PC-9 (cell line): ENCODE measurements at regions of chr14 and their contacts with region 1.

Region 1: GRCh38 chr14:103078093-103078749 is 5.8 kb upstream of the LBHD2 start:
- DNase-seq: peak; percentile 88 to 93
- H3K4me3 ChIP-seq: no peak overlapping the region
- H3K27ac ChIP-seq: no peak overlapping the region
- H3K4me1 ChIP-seq: peaks cover 28% of the 10 kb centered on the region
- H3K27me3 ChIP-seq: no peaks in the 10 kb centered on the region
- CTCF ChIP-seq: peak; percentile 96

Region 2: DNA sequence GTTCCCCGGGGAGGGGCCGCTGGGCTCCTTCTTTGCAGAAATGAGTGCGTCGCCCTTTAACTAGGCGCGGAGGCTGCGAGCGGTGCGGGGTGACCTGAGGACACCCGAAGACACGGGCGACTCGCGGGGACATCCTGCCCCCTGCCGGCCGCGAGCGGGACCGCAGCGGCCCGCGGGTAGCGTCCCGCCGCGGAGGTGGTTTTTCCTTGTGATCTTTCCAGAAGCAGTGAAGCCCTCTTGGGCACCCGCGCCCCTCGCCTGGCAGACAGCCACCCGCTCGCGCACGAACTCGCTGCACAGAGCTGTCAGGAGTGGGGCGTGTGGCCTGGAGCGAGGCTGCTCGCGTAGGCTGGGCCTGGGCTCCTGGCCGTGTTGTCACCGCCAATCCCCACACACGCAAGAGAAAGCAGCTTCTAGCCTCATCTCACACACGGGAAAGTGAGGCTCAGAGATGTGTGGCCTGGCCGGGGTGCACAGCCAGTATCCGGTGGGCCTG is 1449.7 kb before region 1 on chr14:
- CTCF ChIA-PET with region 1: interaction called, 14 read pairs
- POLR2A ChIA-PET with region 1: no interaction called
- intact Hi-C with region 1: no loop called
- DNase-seq: peak; percentile 64 to 92
- H3K4me3 ChIP-seq: no peak overlapping the region
- H3K27ac ChIP-seq: no peak overlapping the region
- H3K4me1 ChIP-seq: peaks cover 19% of the 10 kb centered on the region
- H3K27me3 ChIP-seq: no peaks in the 10 kb centered on the region
- CTCF ChIP-seq: peak; percentile 100

Region 3: GRCh38 chr14:102774391-102775153 is 303.6 kb before region 1 on chr14:
- CTCF ChIA-PET with region 1: no interaction called
- POLR2A ChIA-PET with region 1: no interaction called
- intact Hi-C with region 1: loop called (anchors 10 kb)
- DNase-seq: peak; percentile 67 to 70
- H3K4me3 ChIP-seq: no peak overlapping the region
- H3K27ac ChIP-seq: no peak overlapping the region
- H3K4me1 ChIP-seq: peaks cover 16% of the 10 kb centered on the region
- H3K27me3 ChIP-seq: no peaks in the 10 kb centered on the region
- CTCF ChIP-seq: peak; percentile 87

Region 4: DNA sequence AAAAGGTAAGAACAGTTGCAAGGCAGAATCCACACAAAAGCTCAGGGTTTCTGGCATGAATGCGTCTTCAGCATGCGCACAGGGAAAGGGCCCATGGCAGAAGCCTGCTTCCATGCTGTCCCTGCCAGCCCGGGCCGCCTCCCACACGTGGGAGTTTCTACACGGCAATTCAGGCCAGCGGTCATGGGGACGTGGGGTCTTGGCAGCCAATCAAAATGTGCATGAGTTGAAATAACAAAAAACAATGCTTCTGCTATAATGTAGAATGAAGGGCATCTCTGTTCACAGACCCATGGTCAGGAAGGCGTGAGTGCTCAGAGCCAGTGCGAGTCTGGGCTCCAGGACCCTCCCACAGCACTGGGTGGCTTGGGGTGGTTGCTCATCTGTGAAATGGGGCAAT is 127.2 kb before region 1 on chr14:
- CTCF ChIA-PET with region 1: no interaction called
- POLR2A ChIA-PET with region 1: no interaction called
- intact Hi-C with region 1: no loop called
- DNase-seq: no peak
- H3K4me3 ChIP-seq: no peak overlapping the region
- H3K27ac ChIP-seq: no peak overlapping the region
- H3K4me1 ChIP-seq: no peaks in the 10 kb centered on the region
- H3K27me3 ChIP-seq: no peaks in the 10 kb centered on the region
- CTCF ChIP-seq: no peak

Region 5: GRCh38 chr14:103121846-103122584 is 43.8 kb after region 1 on chr14:
- CTCF ChIA-PET with region 1: no interaction called
- POLR2A ChIA-PET with region 1: no interaction called
- intact Hi-C with region 1: loop called (anchors 1 kb)
- DNase-seq: peak; percentile 100
- H3K4me3 ChIP-seq: peak overlapping the region; percentile 81
- H3K27ac ChIP-seq: peak overlapping the region; percentile 86
- H3K4me1 ChIP-seq: peaks cover 55% of the 10 kb centered on the region
- H3K27me3 ChIP-seq: no peaks in the 10 kb centered on the region
- CTCF ChIP-seq: no peak

Region 6: GRCh38 chr14:103185051-103185992 is 107.1 kb after region 1 on chr14:
- CTCF ChIA-PET with region 1: interaction called, 3 read pairs
- POLR2A ChIA-PET with region 1: no interaction called
- intact Hi-C with region 1: loop called (anchors 1 kb)
- DNase-seq: peak; percentile 49 to 96
- H3K4me3 ChIP-seq: peak overlapping the region; percentile 14; the same call in 1 of the 2 replicates
- H3K27ac ChIP-seq: peak overlapping the region; percentile 92
- H3K4me1 ChIP-seq: peaks cover 37% of the 10 kb centered on the region
- H3K27me3 ChIP-seq: no peaks in the 10 kb centered on the region
- CTCF ChIP-seq: peak; percentile 100

Region 7: GRCh38 chr14:103333754-103334643 is 255.8 kb after region 1 on chr14 and contains the start of gene EIF5:
- CTCF ChIA-PET with region 1: interaction called, 6 read pairs
- POLR2A ChIA-PET with region 1: interaction called, 4 read pairs
- intact Hi-C with region 1: loop called (anchors 2 kb)
- DNase-seq: peak; percentile 98 to 100
- H3K4me3 ChIP-seq: peak within 1 kb of the TSS; percentile 88
- H3K27ac ChIP-seq: peak within 1 kb of the TSS; percentile 94
- H3K4me1 ChIP-seq: peaks cover 42% of the 10 kb centered on the region
- H3K27me3 ChIP-seq: no peaks in the 10 kb centered on the region
- CTCF ChIP-seq: no peak
- total RNA-seq, gene EIF5: 310 and 330 TPM in 2 replicates

Region 8: DNA sequence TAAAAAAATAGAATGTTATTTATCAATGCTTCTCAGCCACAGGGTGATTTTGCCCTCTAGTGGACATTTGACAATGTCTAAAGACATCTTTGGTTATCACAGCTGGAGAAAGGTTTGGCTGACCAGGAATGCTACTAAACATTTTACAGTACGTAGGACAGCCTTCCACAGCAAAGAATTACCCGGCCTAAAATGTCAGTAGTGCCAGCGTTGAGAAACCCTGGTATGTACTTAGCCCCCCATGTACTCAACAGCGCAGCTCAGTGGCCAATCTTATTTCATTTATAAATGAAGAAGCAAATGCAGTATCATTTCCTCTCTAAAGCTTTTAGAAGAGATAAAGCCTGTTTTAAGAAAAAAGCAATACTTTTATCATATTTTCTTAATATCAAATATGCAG is 312.8 kb after region 1 on chr14:
- CTCF ChIA-PET with region 1: interaction called, 4 read pairs
- POLR2A ChIA-PET with region 1: no interaction called
- intact Hi-C with region 1: loop called (anchors 1 kb)
- DNase-seq: peak; percentile 45 to 72
- H3K4me3 ChIP-seq: no peak overlapping the region
- H3K27ac ChIP-seq: no peak overlapping the region
- H3K4me1 ChIP-seq: peaks cover 57% of the 10 kb centered on the region
- H3K27me3 ChIP-seq: no peaks in the 10 kb centered on the region
- CTCF ChIP-seq: peak; percentile 97